Psoas muscle (tissue), 8 donors: ENCODE measurements at regions of chr3 and their contacts with region 1.

Region 1: DNA sequence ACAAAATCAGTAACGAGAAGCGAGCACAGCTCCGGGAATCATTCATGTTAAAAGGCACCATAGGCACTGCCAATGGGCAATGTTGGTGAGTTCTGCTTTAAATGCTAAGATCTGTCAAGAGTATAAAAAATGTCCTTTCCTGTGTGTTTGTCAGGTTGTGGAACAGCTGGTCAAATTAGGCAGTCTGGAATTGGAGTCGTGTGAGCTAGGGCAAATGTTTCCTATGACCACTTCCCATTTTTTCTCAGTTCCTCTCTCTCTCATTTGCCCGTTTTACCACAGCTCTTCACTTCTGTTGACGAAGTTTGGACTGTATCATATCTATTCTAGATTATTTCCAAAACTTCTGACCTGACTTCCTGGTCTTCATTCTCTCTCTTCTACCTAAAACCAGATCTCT is 60.8 kb upstream of the GOLIM4 start:
- DNase-seq: no peak
- ATAC-seq: no peak
- H3K4me3 ChIP-seq: no peak overlapping the region
- H3K27ac ChIP-seq: no peak overlapping the region
- H3K4me1 ChIP-seq: no peaks in the 10 kb centered on the region
- H3K27me3 ChIP-seq: peaks cover 0 to 2% (median 0%) of the 10 kb centered on the region in 3 donors
- CTCF ChIP-seq: no peak

Region 2: DNA sequence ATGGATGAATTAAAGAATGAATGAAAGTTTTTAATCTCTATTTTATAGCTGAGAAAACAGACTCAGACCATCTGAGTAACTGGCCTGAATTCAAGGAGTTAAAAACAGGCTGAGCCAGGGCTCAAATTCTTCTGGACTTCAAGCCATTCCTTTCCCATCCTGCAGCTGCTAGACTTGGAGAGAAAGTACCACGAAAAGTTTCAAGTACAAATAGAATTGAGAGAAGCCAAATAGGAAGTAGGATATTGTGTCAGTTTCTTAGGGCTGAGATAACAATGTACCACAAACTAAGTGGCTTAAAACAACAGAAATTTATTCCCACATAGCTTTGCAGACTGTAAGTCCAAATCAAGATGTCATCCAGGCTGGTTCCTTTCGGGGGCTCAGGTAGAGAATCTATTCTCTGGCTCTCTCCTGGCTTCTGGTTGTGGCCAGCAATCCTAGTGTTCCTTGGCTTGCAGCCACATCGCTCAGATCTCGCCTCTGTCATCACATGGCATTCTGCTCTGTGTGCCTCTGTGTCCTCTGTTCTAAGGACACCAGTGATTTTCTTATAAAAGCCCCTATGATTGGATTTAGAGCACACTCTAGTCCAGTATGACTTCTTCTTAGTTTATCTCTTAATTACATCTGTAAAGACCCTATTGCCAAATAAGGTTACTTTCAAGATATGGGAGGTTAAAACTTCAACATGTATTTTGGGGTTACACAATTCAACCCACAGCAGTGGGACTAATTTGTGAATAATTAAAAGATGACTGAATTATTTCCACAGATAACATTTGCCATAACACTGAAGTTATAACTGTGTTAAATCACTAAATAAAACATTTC is 35.1 kb before region 1 on chr3:
- intact Hi-C with region 1: loop called in 1 of 2 experiments (anchors 5 kb)
- DNase-seq: peak; percentile 48 to 58
- ATAC-seq: peak; percentile 48 to 82 (median 72)
- H3K4me3 ChIP-seq: no peak overlapping the region
- H3K27ac ChIP-seq: no peak overlapping the region
- H3K4me1 ChIP-seq: peaks cover 25% of the 10 kb centered on the region
- H3K27me3 ChIP-seq: no peaks in the 10 kb centered on the region
- CTCF ChIP-seq: no peak

Region 3: GRCh38 chr3:168585544-168585943 is 429.1 kb after region 1 on chr3:
- intact Hi-C with region 1: no loop called
- DNase-seq: no peak
- ATAC-seq: no peak
- H3K4me3 ChIP-seq: no peak overlapping the region
- H3K27ac ChIP-seq: no peak overlapping the region
- H3K4me1 ChIP-seq: no peaks in the 10 kb centered on the region
- H3K27me3 ChIP-seq: no peaks in the 10 kb centered on the region
- CTCF ChIP-seq: no peak